ENCODE measurements at regions of chr11 and their contacts with region 1.

Region 1: GRCh38 chr11:121591405-121592033 is 138.8 kb upstream of the SORL1-AS1 start:
- DNase-seq: peak; percentile 76
- CTCF ChIP-seq: peak; percentile 73

Region 2: GRCh38 chr11:121249039-121249663 is 342.4 kb before region 1 on chr11:
- in situ Hi-C with region 1: loop called (anchors 10 kb)
- DNase-seq: peak; percentile 70
- CTCF ChIP-seq: peak; percentile 47

Region 3: DNA sequence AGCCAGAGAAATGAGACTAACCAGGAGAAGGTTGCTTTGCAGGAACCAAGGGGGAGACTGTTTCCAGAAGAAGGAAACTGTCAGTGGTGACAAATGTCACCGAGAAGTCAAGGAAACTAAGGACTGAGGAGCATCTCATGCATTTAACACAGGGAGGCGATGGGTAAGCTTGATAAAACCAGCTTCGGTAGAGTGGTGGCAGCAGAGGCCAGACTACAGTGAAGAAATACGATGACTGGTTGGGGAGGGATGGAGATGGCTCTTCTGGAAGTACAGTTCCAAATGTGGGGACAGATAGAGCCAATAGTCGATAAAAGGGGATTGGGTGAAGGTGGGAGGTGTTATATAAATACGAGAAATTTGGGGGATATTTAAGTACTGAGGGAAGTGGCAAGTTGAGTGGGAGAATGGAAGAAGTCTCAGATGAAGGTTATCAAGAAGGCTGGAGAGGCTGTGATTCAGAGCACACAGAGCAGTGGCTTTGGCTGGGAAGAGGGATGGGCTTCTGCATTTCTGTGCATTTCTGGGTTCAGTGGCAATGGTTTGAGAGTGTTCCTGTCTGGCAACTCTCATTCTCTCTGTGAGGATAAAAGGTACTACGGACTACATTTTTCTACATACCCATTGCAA is 269.8 kb before region 1 on chr11:
- in situ Hi-C with region 1: loop called (anchors 5 kb)
- DNase-seq: peak; percentile 51
- CTCF ChIP-seq: peak; percentile 78

Region 4: DNA sequence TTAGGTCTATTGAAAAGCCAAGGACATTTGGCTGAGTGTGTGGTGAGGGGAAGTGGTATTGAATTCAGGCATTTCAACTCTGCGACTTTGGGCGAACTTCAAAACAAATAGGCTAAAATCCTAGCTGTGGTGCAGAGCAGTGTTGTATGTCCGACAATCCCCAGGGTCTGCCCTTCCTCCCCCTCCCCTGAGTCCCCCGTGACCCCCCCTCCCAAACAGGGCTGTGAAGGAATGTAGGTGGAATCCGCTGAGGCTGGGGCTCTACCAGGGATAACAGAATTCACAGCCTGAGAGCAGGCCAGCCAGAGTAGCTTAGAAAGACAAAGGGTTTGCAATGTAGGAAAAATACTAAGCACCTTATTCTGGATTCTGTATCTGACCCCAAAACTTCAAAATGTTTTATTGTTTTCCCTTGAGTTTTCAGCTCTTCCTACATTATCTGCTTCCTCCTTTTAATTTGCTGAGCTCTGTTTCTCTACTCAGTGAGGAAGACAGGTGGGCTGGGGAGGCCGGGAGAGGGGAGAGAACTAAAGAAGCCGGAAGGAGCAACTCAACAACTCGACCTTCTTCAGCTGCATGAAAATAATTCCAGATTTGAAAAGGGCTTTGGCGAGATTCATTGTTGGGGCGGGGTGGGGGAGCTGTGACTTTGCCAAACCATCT is 209.3 kb after region 1 on chr11:
- in situ Hi-C with region 1: no loop called
- DNase-seq: no peak
- CTCF ChIP-seq: no peak

Region 5: GRCh38 chr11:122367809-122368231 is 776.3 kb after region 1 on chr11:
- in situ Hi-C with region 1: no loop called
- DNase-seq: no peak
- CTCF ChIP-seq: no peak

Measured in GM13976 (cell line).